Mammary epithelial cell (primary cell): ENCODE measurements at regions of chr6 and their contacts with region 1.

Region 1: DNA sequence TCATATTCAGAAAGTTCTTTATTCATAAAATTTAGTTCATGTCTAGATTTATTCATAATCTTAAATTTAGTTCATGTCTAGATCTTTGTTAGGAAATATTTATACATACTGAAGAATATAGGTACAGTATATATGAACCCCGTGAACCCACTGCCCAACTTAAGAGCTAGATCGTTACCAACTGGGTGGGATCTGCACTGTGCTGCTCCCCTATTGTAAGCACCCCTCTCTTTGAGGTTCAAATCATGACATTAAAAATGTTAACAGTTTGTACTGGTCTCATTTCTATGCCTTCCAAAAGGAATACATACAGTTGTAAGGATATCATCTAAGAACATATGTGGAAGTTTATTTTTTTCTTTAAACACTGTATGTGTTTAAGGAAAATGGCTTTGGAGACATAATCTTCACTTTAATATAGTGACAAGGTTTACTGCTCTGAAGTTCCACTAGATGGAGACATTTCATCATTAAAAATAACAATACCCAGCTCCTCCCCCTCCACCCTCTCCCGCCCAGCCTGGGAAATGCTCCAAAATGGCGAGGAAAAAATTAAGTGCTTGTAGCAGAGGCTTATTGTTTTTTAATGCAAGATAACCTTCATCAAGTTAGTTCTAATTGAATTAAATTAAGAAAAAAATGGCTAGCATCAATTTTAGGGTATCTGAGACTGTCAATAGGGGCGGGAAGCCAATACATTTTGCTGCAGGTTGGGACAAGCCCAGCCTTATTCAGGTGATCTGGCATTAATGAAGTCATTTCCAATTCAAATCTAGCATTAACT is 104.1 kb upstream of the TRAF3IP2 start:
- DNase-seq: peak; percentile 54
- H3K4me3 ChIP-seq: peak overlapping the region in 2 of 3 experiments; percentile 11 to 22
- H3K27ac ChIP-seq: peak overlapping the region; percentile 28
- H3K4me1 ChIP-seq: peaks cover 8% of the 10 kb centered on the region
- H3K27me3 ChIP-seq: no peaks in the 10 kb centered on the region
- CTCF ChIP-seq: peak; percentile 56 to 61

Region 2: DNA sequence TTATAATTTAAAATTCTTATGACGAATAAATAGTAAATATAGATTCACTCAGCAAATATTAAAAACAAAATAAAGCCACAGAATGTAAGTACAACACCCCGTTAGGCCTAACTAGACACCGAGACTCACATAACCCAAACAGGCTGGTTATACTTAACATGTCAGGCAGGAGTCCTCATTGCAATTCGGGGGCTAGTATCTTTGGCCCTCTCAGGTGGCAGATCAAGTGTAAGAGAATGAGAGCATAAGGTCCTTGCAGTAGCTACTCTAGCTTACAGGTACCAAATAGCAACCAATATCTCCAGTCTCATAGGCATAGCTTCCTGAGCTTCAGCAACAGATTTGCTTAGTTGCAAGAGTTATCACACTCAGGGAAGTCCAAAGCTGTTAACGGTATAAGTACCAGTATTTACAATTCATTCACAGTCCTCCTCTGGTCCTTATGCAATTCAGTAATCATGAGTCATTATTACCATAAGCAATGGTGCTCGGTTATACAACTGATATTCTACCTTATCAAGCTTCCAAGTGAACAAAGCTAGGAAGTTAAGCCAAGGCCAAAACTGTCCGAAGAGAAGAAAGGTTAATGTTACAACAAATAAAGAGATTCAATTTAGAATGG is 246.9 kb before region 1 on chr6:
- CTCF ChIA-PET with region 1: no interaction called
- dilution Hi-C with region 1: no loop called
- in situ Hi-C with region 1: no loop called
- intact Hi-C with region 1: no loop called
- DNase-seq: peak; percentile 65
- H3K4me3 ChIP-seq: no peak overlapping the region
- H3K27ac ChIP-seq: no peak overlapping the region
- H3K4me1 ChIP-seq: peaks cover 5% of the 10 kb centered on the region
- H3K27me3 ChIP-seq: no peaks in the 10 kb centered on the region
- CTCF ChIP-seq: no peak

Region 3: GRCh38 chr6:111625461-111626391 is 84.1 kb before region 1 on chr6:
- CTCF ChIA-PET with region 1: no interaction called
- dilution Hi-C with region 1: no loop called
- in situ Hi-C with region 1: no loop called
- intact Hi-C with region 1: no loop called
- DNase-seq: peak; percentile 53
- H3K4me3 ChIP-seq: no peak overlapping the region
- H3K27ac ChIP-seq: no peak overlapping the region
- H3K4me1 ChIP-seq: peaks cover 21% of the 10 kb centered on the region
- H3K27me3 ChIP-seq: no peaks in the 10 kb centered on the region
- CTCF ChIP-seq: no peak

Region 4: GRCh38 chr6:111743862-111744692 is 34.3 kb after region 1 on chr6:
- CTCF ChIA-PET with region 1: no interaction called
- dilution Hi-C with region 1: no loop called
- in situ Hi-C with region 1: no loop called
- intact Hi-C with region 1: no loop called
- DNase-seq: no peak
- H3K4me3 ChIP-seq: no peak overlapping the region
- H3K27ac ChIP-seq: no peak overlapping the region
- H3K4me1 ChIP-seq: no peaks in the 10 kb centered on the region
- H3K27me3 ChIP-seq: no peaks in the 10 kb centered on the region
- CTCF ChIP-seq: no peak

Region 5: GRCh38 chr6:112037783-112038216 is 328.0 kb after region 1 on chr6:
- CTCF ChIA-PET with region 1: no interaction called
- dilution Hi-C with region 1: loop called (anchors 10 kb)
- in situ Hi-C with region 1: loop called in 1 of 2 experiments (anchors 5 kb)
- intact Hi-C with region 1: no loop called
- DNase-seq: peak; percentile 91
- H3K4me3 ChIP-seq: no peak overlapping the region
- H3K27ac ChIP-seq: peak overlapping the region; percentile 62
- H3K4me1 ChIP-seq: peaks cover 14% of the 10 kb centered on the region
- H3K27me3 ChIP-seq: no peaks in the 10 kb centered on the region
- CTCF ChIP-seq: no peak